Gastrocnemius medialis (tissue), 4 donors: ENCODE measurements at regions of chr1 and their contacts with region 1.

Region 1: DNA sequence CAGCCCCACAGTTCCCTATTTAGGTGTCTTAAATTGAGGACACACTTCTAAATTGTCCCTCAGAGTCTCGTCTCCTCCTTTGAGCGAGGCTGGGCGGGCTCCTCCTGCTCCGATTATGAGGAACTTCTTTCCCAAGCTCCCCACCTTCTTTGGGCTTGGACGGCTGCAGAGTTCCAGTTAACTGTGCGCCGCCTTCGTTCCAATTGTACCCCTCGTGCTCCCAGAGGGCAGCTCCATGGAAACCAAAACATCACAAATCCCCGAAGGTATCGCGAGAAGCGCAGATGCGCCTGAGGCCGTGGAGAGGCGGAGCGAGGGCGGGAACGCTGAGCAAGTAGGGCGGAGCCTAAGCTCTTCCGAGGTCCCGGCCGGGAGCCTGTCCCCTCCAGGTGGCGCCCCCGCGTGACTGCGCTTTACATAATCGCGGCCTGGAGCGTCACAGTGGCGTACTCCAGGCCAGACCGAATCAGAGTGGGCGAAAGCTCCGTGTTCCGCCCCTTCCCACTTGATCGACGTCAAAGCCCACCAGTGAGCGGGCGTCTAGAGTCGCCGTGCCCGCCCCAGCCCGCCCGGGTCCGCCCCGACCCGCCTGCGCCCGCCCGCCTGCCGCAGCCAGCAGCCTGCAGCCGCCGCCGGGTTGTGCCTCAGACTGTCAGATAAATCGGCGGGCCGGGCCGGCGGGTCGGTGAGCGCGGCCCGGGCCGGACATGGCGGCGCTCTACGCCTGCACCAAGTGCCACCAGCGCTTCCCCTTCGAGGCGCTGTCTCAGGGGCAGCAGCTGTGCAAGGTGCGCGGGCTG is at the start of gene FAM76A:
- DNase-seq: peak; percentile 99
- ATAC-seq: peak; percentile 97 to 98
- H3K4me3 ChIP-seq: peak within 1 kb of the TSS; percentile 71 to 92 (median 78)
- H3K27ac ChIP-seq: peak within 1 kb of the TSS; percentile 88 to 97 (median 92)
- H3K4me1 ChIP-seq: peaks cover 17 to 20% of the 10 kb centered on the region in 2 donors
- H3K27me3 ChIP-seq: no peaks in the 10 kb centered on the region
- CTCF ChIP-seq: peak in 2 of 5 experiments; percentile 38 to 50
- POLR2A ChIP-seq: peak; percentile 65 to 87
- total RNA-seq, gene FAM76A: 9.4 to 20.0 (median 15.5) TPM

Region 2: GRCh38 chr1:27321813-27322577 is 403.6 kb before region 1 on chr1 and contains the start of gene TMEM222:
- in situ Hi-C with region 1: no loop called
- intact Hi-C with region 1: loop called (anchors 5 kb)
- DNase-seq: peak; percentile 95 to 96
- ATAC-seq: peak; percentile 97
- H3K4me3 ChIP-seq: peak within 1 kb of the TSS; percentile 85 to 100 (median 87)
- H3K27ac ChIP-seq: peak within 1 kb of the TSS; percentile 90 to 95 (median 92)
- H3K4me1 ChIP-seq: peaks cover 21 to 35% of the 10 kb centered on the region in 2 donors
- H3K27me3 ChIP-seq: peaks cover 17 to 19% (median 18%) of the 10 kb centered on the region in 3 donors
- CTCF ChIP-seq: peak in 4 of 5 experiments; percentile 36 to 42 (median 38)
- POLR2A ChIP-seq: peak; percentile 54 to 62
- total RNA-seq, gene TMEM222: 16.5 to 21.9 (median 17.8) TPM

Region 3: GRCh38 chr1:27489910-27490741 is 235.4 kb before region 1 on chr1 and contains the start of gene WASF2:
- in situ Hi-C with region 1: no loop called
- intact Hi-C with region 1: loop called (anchors 5 kb)
- DNase-seq: peak; percentile 96
- ATAC-seq: peak; percentile 92 to 94
- H3K4me3 ChIP-seq: peak within 1 kb of the TSS; percentile 85 to 100 (median 95)
- H3K27ac ChIP-seq: peak within 1 kb of the TSS; percentile 97 to 100 (median 100)
- H3K4me1 ChIP-seq: peaks cover 30 to 46% of the 10 kb centered on the region in 2 donors
- H3K27me3 ChIP-seq: no peaks in the 10 kb centered on the region
- CTCF ChIP-seq: no peak
- POLR2A ChIP-seq: peak; percentile 90 to 93
- total RNA-seq, gene WASF2: 10.6 to 16.7 (median 13.3) TPM

Region 4: DNA sequence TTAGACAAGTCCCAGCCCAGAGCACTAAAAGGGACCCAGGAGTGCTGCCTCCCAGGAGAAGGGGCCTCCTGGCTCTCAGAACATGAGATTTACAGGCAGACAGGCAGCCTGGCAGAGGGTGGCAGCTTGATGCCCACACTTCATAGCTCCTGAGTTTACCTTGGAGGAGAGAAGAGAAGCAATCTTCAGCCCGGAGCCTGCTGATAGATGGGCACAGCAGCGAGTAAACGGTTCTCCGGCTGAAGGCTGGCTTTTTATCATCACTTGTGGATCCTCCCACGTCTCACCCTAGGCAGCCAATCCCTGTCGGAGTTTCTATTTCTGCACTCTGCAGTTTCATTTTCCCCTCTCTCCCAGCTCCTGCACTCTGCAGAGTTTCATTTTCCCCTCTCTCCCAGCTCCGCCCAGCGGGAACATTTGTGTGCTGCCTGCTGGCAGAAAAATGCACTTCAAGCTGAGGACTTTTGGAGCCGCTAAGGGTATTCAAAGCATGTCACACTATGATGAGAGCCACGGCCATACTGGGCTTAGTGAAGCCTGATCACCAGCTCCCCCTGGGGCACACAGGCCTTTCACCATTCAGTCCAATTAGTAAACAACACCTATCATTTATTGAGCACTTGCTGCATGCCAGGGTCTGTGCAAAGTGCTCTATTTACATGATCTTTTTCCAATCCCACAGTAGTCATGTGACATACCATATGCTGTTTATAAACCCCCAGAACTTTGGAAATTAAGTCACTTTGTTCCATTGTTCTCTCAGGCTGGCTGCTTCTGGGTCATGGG is 53.4 kb before region 1 on chr1 and contains the start of gene IFI6:
- in situ Hi-C with region 1: no loop called
- intact Hi-C with region 1: loop called (anchors 1 kb)
- DNase-seq: peak; percentile 68 to 80
- ATAC-seq: peak; percentile 96 to 98
- H3K4me3 ChIP-seq: peak within 1 kb of the TSS; percentile 52 to 72 (median 65)
- H3K27ac ChIP-seq: peak within 1 kb of the TSS; percentile 72 to 83 (median 80)
- H3K4me1 ChIP-seq: peaks cover 16 to 27% of the 10 kb centered on the region in 2 donors
- H3K27me3 ChIP-seq: no peaks in the 10 kb centered on the region
- CTCF ChIP-seq: peak in 4 of 5 experiments; percentile 21 to 52 (median 36)
- POLR2A ChIP-seq: peak; percentile 33 to 73
- total RNA-seq, gene IFI6: 7.7 to 25.1 (median 14.5) TPM

Region 5: DNA sequence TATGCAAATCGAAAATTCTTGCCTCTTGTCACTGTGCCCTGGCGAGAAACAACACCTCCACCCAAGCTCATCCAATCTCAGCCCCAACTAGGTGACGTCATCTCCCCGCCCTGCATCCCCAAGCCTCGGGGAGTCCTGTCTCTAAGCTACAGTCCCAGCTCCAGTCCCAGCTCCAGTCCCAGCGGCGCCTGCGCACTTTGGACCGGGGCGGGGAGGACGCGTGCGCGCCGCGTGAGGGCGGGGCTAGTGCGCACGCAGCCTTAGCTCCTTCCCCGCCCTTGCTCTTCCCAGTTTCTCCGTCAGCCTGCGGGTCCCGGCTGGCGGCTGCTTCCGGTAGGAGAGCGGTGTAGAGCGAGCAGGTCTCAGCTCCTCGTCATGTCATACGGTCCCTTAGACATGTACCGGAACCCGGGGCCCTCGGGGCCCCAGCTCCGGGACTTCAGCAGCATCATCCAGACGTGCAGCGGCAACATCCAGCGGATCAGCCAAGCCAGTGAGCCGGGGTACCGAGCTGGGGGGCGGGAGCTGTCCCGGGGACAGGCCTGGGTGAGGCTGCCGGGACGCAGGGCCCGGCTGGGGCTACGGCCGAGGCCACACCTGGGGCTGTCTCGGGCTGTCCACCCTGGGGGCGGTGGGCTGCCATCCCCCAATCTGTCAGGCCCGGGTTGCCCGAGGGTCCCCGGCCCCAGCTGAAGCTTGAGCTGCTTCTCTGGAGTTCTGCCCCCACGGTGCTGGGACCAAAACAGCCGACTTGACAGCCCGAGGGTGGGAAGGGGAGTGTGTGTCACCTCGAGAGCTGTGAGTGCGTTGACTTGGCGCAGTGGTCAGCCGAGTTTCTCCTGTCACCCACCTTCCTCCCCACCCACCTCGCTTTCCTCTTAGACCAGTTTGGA is 47.6 kb after region 1 on chr1 and contains the start of gene STX12:
- in situ Hi-C with region 1: no loop called
- intact Hi-C with region 1: loop called (anchors 1 kb)
- DNase-seq: peak; percentile 93 to 97
- ATAC-seq: peak; percentile 95
- H3K4me3 ChIP-seq: peak within 1 kb of the TSS; percentile 86 to 95 (median 88)
- H3K27ac ChIP-seq: peak within 1 kb of the TSS; percentile 83 to 94 (median 91)
- H3K4me1 ChIP-seq: peaks cover 10 to 18% of the 10 kb centered on the region in 2 donors
- H3K27me3 ChIP-seq: no peaks in the 10 kb centered on the region
- CTCF ChIP-seq: no peak
- POLR2A ChIP-seq: peak; percentile 87 to 91
- total RNA-seq, gene STX12: 19.2 to 71.6 (median 31.2) TPM

Region 6: GRCh38 chr1:27830621-27831424 is 105.2 kb after region 1 on chr1 and contains the start of gene PPP1R8:
- in situ Hi-C with region 1: no loop called
- intact Hi-C with region 1: loop called (anchors 2 kb)
- DNase-seq: peak; percentile 87 to 91
- ATAC-seq: peak; percentile 98 to 99
- H3K4me3 ChIP-seq: peak within 1 kb of the TSS; percentile 86 to 95 (median 91)
- H3K27ac ChIP-seq: peak within 1 kb of the TSS; percentile 86 to 92 (median 87)
- H3K4me1 ChIP-seq: peaks cover 20 to 36% of the 10 kb centered on the region in 2 donors
- H3K27me3 ChIP-seq: no peaks in the 10 kb centered on the region
- CTCF ChIP-seq: no peak
- POLR2A ChIP-seq: peak; percentile 75 to 80
- total RNA-seq, gene PPP1R8: 18.0 to 27.3 (median 25.0) TPM

Region 7: DNA sequence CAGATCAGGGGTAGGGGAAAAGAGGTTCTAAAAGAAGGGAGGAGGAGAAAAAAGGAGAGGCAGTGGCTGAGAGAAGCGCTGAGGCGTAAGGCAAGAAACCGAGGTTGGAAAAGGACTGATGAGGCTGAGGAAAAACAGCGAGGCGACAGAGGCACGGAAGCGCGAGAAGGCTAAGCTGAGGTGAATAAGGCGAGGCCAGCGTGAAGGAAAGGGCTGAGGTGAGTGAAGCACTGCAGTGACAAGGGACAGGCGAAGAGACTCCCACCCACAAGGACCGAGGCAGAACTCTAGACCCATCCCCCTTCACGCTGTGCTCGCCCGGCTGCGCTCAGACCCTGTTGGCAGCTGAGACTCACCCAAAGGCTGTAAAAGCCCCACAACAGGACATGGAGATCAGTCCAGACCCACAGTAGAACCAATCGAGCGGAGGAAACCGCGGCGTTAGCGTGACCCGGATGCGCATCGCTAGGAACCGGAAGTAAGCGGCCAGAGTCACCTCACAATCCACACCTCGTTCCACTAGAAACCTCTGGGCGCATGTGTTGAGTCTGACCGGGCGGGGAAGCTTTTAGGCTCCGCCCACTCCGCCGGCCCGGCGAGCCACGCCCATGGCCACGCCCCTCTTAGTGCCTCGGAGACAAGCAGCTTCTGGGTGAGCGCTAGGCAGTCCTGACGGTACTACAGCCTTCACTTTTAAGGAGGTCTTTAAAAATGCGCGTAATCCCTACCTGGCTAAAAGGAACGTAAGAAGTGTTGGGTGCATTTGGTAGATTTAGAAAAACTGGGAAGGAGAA is 362.8 kb after region 1 on chr1 and contains the start of gene EYA3:
- in situ Hi-C with region 1: no loop called
- intact Hi-C with region 1: loop called (anchors 5 kb)
- DNase-seq: peak; percentile 95 to 99
- ATAC-seq: peak; percentile 98
- H3K4me3 ChIP-seq: peak within 1 kb of the TSS; percentile 62 to 89 (median 72)
- H3K27ac ChIP-seq: peak within 1 kb of the TSS; percentile 87 to 91 (median 89)
- H3K4me1 ChIP-seq: peaks cover 22 to 43% of the 10 kb centered on the region in 2 donors
- H3K27me3 ChIP-seq: no peaks in the 10 kb centered on the region
- CTCF ChIP-seq: no peak
- POLR2A ChIP-seq: peak; percentile 61 to 74
- total RNA-seq, gene EYA3: 9.2 to 19.5 (median 15.4) TPM